Activated CD4-positive, alpha-beta T cell treated with anti-CD3 and anti-CD28 coated beads, Interleukin-2, amount 10 ng/mL, durations not matched to agents 7 days and 5 days (primary cell): ENCODE measurements at regions of chr13 and their contacts with region 1.

Region 1: DNA sequence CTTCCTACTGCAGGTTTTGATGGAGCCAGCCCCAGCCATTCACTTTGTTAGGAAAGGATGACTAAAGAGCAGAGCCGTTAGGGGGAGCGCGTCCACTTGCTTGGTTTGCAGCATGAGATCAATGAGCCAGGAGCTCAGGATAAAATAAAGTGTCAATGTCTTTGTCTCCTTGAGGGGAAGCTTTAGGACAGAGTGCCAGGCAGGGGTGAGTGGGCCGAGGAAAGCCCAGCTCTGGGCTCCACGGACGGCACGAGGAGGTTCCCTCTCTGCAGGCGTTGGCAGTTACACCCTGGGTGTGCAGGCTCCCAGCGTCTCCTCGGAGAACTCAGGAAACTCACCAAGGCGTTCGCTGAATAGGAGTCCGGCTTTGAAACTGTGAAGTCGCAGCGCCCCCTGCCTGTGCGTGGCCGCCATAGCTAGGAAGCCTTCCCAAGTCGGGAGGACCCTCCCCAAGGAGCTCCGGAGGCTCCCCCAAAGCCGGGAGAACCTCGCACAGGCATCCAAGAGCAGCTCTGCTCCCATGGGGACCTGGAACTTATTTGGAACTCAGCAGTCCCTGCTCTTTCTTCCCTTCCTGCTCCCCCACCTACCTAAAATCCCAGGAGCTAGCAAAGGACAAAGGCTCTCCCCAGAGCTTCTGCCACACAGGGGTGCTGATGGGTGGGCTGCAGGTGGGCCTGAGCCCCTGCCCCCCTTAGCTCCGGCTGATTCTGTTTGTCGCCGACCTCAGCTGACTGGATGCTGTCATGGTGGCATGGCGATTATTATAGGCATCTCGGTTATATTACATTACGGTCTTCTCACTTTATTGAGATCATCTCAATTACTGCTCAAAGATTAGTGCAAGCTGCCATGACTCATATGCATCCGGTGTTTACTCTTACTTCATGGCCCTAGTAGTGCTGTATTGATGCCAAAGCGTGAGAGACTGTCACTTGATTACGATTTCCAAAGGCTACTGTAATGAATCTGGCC is 34.4 kb downstream of the GSX1 start:
- DNase-seq: peak; percentile 70
- H3K4me3 Mint-ChIP-seq: peak overlapping the region; percentile 4
- H3K27ac Mint-ChIP-seq: no peak overlapping the region
- H3K4me1 Mint-ChIP-seq: peaks cover 5% of the 10 kb centered on the region
- H3K27me3 Mint-ChIP-seq: peaks cover 62% of the 10 kb centered on the region

Region 2: DNA sequence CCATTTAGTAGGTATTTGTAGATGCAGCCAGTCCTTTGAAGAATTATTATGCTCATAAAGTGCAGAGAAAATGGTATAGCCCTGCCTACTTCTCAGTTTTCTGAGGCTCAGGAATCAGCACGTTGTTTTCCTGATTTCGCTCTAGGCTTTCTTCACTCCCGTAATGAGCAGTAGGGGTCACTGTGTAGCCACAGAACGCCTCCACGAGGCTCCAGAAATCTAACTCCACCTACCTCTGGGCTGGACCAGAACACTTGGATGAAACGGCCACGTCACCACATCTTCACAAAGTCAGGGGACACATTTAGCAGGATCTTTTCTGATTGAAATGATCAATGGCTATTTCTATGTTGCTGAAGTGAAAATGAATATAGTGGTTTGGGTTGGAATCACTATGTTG is 452.0 kb before region 1 on chr13:
- CTCF ChIA-PET with region 1: interaction called, 14 read pairs
- POLR2A ChIA-PET with region 1: no interaction called
- DNase-seq: peak; percentile 59
- H3K4me3 Mint-ChIP-seq: no peak overlapping the region
- H3K27ac Mint-ChIP-seq: no peak overlapping the region
- H3K4me1 Mint-ChIP-seq: peaks cover 12% of the 10 kb centered on the region
- H3K27me3 Mint-ChIP-seq: peaks cover 13% of the 10 kb centered on the region

Region 3: GRCh38 chr13:28022848-28023518 is 196.3 kb after region 1 on chr13:
- CTCF ChIA-PET with region 1: no interaction called
- POLR2A ChIA-PET with region 1: no interaction called
- DNase-seq: no peak
- H3K4me3 Mint-ChIP-seq: no peak overlapping the region
- H3K27ac Mint-ChIP-seq: no peak overlapping the region
- H3K4me1 Mint-ChIP-seq: peaks cover 7% of the 10 kb centered on the region
- H3K27me3 Mint-ChIP-seq: no peaks in the 10 kb centered on the region